ENCODE measurements at regions of chr4 and their contacts with region 1.

Region 1: DNA sequence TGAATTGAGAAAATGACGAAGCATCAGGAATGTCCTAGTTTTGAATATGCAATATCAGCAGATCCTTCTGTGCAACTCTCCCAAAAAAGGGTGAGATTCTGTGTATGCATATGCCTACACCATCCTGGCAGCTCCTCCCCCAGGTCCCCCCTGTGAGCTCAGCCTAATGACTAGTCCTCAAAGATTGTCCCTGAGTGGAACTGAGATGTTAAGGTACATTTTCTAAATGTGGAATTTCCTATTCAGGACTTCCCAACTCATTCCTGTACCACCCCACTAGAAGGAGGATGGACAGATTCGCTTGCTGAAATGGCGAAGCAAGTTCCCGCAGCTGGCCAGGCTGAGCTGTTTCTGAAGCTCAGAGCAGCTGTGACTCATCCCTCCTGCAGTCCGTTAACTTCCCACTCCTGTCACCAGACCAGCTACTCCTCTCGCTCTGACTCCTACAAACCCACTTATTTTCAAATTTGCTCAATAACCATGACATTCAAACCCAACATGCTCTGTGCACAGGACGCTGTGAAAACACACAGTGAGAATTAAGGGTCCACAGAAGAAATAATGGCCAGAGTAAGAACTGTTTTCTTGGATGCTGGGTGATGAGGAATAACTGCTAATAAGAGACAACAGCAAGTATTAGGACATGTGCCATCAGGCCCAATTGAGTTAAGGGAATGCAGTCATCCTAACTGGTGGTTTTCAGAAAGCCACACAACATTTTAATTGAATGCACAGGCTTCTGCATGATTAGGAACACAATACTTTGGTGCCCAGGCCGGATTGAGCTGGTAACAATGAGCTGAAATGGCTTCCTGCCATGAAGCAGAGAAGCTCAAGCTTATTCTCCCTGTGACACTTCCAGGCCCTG is 40.0 kb upstream of the IRF2 start:
- DNase-seq: peak; percentile 53
- H3K4me3 Mint-ChIP-seq: peak overlapping the region; percentile 66
- H3K27ac Mint-ChIP-seq: peak overlapping the region; percentile 90
- H3K4me1 Mint-ChIP-seq: peaks cover 51% of the 10 kb centered on the region
- H3K27me3 Mint-ChIP-seq: no peaks in the 10 kb centered on the region

Region 2: GRCh38 chr4:184237612-184238011 is 276.7 kb before region 1 on chr4:
- intact Hi-C with region 1: loop called (anchors 1 kb)
- DNase-seq: peak; percentile 38
- H3K4me3 Mint-ChIP-seq: peak overlapping the region; percentile 9
- H3K27ac Mint-ChIP-seq: peak overlapping the region; percentile 85
- H3K4me1 Mint-ChIP-seq: peaks cover 37% of the 10 kb centered on the region
- H3K27me3 Mint-ChIP-seq: no peaks in the 10 kb centered on the region

Region 3: GRCh38 chr4:184263910-184264732 is 250.2 kb before region 1 on chr4:
- intact Hi-C with region 1: loop called (anchors 1 kb)
- DNase-seq: peak; percentile 85
- H3K4me3 Mint-ChIP-seq: no peak overlapping the region
- H3K27ac Mint-ChIP-seq: peak overlapping the region; percentile 54
- H3K4me1 Mint-ChIP-seq: peaks cover 54% of the 10 kb centered on the region
- H3K27me3 Mint-ChIP-seq: no peaks in the 10 kb centered on the region

Region 4: DNA sequence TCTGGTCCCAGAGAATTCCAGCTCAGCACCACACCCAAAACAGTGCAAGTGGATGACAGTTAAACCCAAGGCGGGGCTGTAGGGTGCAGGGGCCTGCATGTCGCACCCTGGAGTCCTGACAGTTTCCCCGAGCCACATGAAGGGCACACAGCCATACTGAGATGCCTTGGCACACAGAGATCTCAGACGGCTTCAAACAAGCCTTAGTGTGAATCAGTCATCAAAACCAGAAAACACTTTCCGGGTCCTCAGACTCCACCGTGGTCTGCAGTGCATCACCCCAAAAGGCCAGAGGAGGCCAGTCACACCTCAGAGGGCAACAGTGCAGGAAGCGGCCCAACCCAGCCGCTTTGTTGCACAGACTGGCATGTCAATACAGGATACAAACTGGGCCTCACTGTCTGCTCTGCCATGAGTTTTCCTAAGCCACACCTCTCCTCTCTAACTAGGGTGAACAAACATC is 232.1 kb before region 1 on chr4:
- intact Hi-C with region 1: loop called (anchors 1 kb)
- DNase-seq: peak; percentile 52
- H3K4me3 Mint-ChIP-seq: no peak overlapping the region
- H3K27ac Mint-ChIP-seq: peak overlapping the region; percentile 92
- H3K4me1 Mint-ChIP-seq: peaks cover 63% of the 10 kb centered on the region
- H3K27me3 Mint-ChIP-seq: no peaks in the 10 kb centered on the region

Region 5: GRCh38 chr4:184287697-184288255 is 226.6 kb before region 1 on chr4:
- intact Hi-C with region 1: loop called (anchors 1 kb)
- DNase-seq: no peak
- H3K4me3 Mint-ChIP-seq: no peak overlapping the region
- H3K27ac Mint-ChIP-seq: peak overlapping the region; percentile 13
- H3K4me1 Mint-ChIP-seq: peaks cover 49% of the 10 kb centered on the region
- H3K27me3 Mint-ChIP-seq: no peaks in the 10 kb centered on the region

Region 6: DNA sequence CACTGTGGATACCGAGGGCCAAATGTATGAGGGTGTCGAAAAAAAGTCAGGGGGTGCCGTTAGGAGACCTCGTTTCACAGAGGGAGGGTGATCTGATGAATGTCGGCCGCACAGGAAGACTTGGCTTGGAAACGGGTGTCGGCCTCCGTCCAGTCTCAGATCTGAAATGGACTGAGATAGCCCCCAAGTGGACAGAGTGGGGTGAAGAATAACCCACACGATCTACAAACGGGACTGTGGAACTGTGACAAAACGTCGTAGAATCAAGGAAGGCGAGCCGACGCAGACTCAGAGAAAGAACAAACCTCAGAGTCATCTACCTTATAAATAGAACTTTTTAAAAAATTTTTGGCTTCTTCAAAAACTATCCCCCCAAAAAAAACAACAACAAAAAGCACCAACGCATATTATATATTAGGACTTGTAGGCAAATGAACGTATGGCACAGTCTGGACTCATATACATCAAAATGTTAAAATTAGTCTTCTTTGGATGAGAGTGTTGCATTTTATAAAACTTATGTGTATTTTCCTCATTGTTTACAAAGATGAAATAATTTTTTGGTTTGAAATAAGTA is 23.8 kb after region 1 on chr4:
- intact Hi-C with region 1: loop called (anchors 1 kb)
- DNase-seq: peak; percentile 53
- H3K4me3 Mint-ChIP-seq: peak overlapping the region; percentile 85
- H3K27ac Mint-ChIP-seq: peak overlapping the region; percentile 87
- H3K4me1 Mint-ChIP-seq: peaks cover 61% of the 10 kb centered on the region
- H3K27me3 Mint-ChIP-seq: no peaks in the 10 kb centered on the region

Region 7: DNA sequence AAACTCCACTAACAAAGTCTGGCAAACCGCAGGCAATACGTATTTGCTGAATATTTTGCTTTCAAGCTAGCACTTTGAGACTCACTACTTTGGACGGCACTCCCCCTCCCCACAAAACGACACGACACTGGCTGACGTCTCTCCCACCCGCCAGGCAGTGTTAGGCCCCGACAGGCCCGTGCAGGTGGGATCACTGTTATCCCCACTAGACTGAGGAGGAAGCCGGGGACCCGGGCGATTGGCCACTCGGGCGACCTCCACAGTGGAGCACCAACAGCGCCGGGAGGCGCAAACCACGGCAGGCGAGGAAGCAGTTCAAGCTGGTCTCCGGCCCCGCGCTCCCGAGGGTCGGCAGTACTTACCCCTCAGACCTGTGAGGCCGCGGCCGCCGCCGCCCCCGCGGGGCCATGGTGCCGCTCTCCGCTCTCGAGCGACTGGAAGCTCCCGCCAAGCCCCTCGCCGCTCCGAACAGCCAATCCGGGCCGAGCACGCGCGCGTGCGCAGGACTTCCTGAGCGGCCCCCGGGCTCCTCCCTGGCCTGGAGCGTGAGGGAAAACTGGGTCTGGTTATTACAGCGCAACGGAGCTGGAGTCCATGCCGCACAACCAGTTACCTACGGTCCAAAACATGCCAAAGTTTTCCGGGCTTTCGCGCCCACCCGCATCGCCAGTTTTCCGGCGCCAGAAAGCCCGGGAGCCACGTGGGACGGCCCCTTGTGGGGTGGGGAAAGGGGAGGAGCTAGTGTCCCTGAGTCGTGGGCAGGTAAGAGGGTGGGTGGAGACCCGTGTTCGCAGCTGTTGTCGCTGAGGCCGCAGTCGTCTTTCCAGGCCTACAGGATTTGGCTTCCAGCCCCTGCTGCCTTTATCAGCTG is 219.5 kb after region 1 on chr4 and contains the start of gene CENPU:
- intact Hi-C with region 1: no loop called
- DNase-seq: peak; percentile 96
- H3K4me3 Mint-ChIP-seq: peak within 1 kb of the TSS; percentile 93
- H3K27ac Mint-ChIP-seq: peak within 1 kb of the TSS; percentile 87
- H3K4me1 Mint-ChIP-seq: peaks cover 37% of the 10 kb centered on the region
- H3K27me3 Mint-ChIP-seq: no peaks in the 10 kb centered on the region
- total RNA-seq, gene CENPU: 60.9 and 74.2 TPM in 2 replicates

Region 8: DNA sequence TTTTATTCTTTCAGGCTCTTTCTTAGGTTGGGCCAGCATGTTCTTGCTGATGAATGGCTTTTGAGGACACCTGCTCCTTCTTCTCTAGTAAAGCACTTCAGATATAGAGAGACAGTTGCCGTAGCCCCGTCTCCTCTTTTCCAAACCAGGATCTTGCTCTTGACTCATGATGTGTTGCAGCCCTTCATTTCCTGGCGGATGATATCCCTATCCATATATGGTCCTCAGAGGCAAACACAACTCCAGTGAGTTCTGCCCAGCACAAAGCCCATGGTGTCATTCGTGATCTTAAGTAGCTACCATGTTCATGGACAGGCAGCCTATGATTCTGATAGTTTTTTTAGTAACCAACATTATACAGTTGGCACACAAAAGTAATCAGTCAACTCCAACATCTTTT is 371.2 kb after region 1 on chr4:
- intact Hi-C with region 1: no loop called
- DNase-seq: no peak
- H3K4me3 Mint-ChIP-seq: no peak overlapping the region
- H3K27ac Mint-ChIP-seq: no peak overlapping the region
- H3K4me1 Mint-ChIP-seq: no peaks in the 10 kb centered on the region
- H3K27me3 Mint-ChIP-seq: peaks cover 17% of the 10 kb centered on the region

Measured in activated T-helper 2 cell treated with anti-CD3 and anti-CD28 coated beads, Interferon-gamma antibody, Interleukin-2, Interleukin-4, amounts not matched to agents 10 μg/mL and 5 μg/mL and 100 μg/mL, durations not matched to agents 14 hours and 24 hours and 36 hours (primary cell).